ENCODE measurements at regions of chr5 and their contacts with region 1.

Region 1: DNA sequence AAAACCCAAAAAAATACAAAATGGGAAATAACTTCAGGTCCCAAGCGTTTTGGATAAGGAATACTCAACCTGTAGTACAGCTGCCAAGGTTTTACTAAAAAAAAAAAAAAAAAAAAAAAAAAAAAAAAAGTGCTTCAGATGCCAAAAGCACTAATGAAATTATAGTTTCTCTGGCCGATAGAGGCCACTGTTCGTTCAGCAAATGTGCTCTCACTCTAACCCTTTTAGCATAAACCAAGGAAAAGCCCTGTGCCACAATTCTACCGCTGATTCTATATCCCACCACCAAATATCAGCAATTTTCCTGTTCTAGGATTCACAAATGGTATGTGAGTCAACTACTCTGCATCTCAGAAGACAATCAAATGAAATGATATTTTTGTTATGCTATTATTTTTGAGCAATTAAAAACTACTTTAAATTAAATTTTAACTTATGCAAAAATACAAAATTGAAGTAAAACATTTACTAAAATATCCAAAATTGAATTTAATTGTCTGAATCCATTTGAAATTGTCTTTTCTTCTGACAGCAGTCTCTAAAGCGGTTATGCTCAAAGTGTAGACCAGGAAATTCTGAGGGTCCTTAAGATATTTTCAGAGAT is 79.8 kb downstream of the RICTOR start:
- DNase-seq: peak; percentile 62
- ATAC-seq: peak; percentile 33
- H3K4me3 ChIP-seq: no peak overlapping the region
- H3K4me3 Mint-ChIP-seq: no peak overlapping the region
- H3K27ac ChIP-seq: no peak overlapping the region
- H3K27ac Mint-ChIP-seq: no peak overlapping the region
- H3K4me1 ChIP-seq: no peaks in the 10 kb centered on the region
- H3K4me1 Mint-ChIP-seq: peaks cover 2% of the 10 kb centered on the region
- H3K27me3 ChIP-seq: no peaks in the 10 kb centered on the region
- H3K27me3 Mint-ChIP-seq: no peaks in the 10 kb centered on the region
- CTCF ChIP-seq: peak; percentile 33

Region 2: DNA sequence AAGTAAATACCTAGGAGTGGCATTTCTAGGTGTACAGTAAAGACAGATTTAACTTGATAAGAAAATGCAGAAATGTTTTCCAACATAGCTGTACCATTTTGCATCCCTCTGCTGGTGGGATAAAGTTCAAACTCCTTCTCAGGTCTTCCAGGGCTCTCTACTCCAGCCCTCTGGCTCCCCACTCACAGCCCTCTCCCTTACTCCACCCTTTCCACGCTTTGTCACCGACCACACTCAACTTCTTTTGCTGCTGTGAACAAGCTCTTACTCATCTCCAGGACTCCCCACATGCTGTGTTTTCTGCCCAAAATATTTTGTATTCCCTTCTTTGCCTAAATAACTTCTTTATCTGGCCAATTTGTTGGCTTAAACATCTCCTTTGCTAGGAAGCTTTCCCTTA is 239.2 kb before region 1 on chr5:
- CTCF ChIA-PET with region 1: no interaction called
- POLR2A ChIA-PET with region 1: no interaction called
- intact Hi-C with region 1: no loop called
- DNase-seq: no peak
- ATAC-seq: no peak
- H3K4me3 ChIP-seq: no peak overlapping the region
- H3K4me3 Mint-ChIP-seq: no peak overlapping the region
- H3K27ac ChIP-seq: no peak overlapping the region
- H3K27ac Mint-ChIP-seq: no peak overlapping the region
- H3K4me1 ChIP-seq: no peaks in the 10 kb centered on the region
- H3K4me1 Mint-ChIP-seq: no peaks in the 10 kb centered on the region
- H3K27me3 ChIP-seq: no peaks in the 10 kb centered on the region
- H3K27me3 Mint-ChIP-seq: peaks cover 16% of the 10 kb centered on the region
- CTCF ChIP-seq: no peak

Region 3: GRCh38 chr5:38831909-38832308 is 162.5 kb before region 1 on chr5:
- CTCF ChIA-PET with region 1: no interaction called
- POLR2A ChIA-PET with region 1: no interaction called
- intact Hi-C with region 1: no loop called
- DNase-seq: no peak
- ATAC-seq: no peak
- H3K4me3 ChIP-seq: no peak overlapping the region
- H3K4me3 Mint-ChIP-seq: no peak overlapping the region
- H3K27ac ChIP-seq: no peak overlapping the region
- H3K27ac Mint-ChIP-seq: no peak overlapping the region
- H3K4me1 ChIP-seq: no peaks in the 10 kb centered on the region
- H3K4me1 Mint-ChIP-seq: no peaks in the 10 kb centered on the region
- H3K27me3 ChIP-seq: no peaks in the 10 kb centered on the region
- H3K27me3 Mint-ChIP-seq: peaks cover 24% of the 10 kb centered on the region
- CTCF ChIP-seq: no peak

Region 4: DNA sequence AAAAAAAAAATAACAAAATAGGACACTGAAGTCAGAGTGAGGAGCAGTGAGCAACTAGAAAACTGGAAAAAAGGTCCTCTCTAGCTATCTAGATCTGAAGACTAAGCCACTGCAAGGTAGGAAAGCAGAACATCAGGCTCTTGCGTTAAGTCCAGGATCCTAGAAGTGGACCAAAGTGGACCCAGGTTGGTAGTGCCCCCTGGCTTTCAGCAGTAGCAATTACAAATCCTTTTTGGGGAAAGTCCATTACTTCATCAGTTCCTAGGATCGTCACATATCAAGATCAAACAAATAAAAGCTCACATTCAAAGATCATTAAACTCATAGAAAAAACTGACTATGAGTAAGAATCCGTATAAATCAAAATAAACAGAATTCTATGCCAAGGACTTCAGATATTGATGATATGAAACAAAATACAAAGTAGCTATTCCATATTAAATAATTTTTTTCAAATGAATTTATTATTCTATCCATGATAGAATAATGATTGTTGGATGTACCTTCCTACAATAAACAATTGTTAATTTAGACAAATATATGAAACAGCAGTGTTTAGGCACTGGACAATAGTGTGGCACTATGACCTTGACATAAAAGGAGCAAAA is 86.3 kb after region 1 on chr5:
- CTCF ChIA-PET with region 1: interaction called, 26 read pairs
- POLR2A ChIA-PET with region 1: no interaction called
- intact Hi-C with region 1: loop called (anchors 1 kb)
- DNase-seq: peak; percentile 55
- ATAC-seq: peak; percentile 37
- H3K4me3 ChIP-seq: no peak overlapping the region
- H3K4me3 Mint-ChIP-seq: no peak overlapping the region
- H3K27ac ChIP-seq: no peak overlapping the region
- H3K27ac Mint-ChIP-seq: no peak overlapping the region
- H3K4me1 ChIP-seq: peaks cover 10 to 16% of the 10 kb centered on the region in 2 donors
- H3K4me1 Mint-ChIP-seq: peaks cover 23% of the 10 kb centered on the region
- H3K27me3 ChIP-seq: no peaks in the 10 kb centered on the region
- H3K27me3 Mint-ChIP-seq: peaks cover 3% of the 10 kb centered on the region
- CTCF ChIP-seq: peak; percentile 76

Region 5: DNA sequence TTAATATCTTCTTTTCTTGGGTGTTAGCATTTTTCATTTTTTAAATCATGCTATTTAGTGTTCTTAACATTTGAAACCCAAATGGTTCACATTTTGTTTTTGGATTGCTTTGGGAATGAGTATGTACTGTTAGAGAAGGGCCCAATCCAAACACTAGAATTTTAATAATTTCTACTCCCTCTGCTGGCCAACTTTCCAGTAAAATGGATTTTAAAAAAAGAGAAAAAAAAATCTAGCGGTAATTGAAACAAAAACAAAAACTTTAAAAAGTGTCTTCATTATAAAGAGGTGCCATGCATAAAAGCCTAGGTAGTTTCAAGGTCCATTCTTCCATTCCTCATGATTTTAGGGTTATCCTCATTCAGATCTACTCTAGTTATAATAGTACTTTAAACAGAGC is 111.9 kb after region 1 on chr5:
- CTCF ChIA-PET with region 1: interaction called, 3 read pairs
- POLR2A ChIA-PET with region 1: no interaction called
- intact Hi-C with region 1: loop called (anchors 1 kb)
- DNase-seq: peak; percentile 18
- ATAC-seq: no peak
- H3K4me3 ChIP-seq: no peak overlapping the region
- H3K4me3 Mint-ChIP-seq: no peak overlapping the region
- H3K27ac ChIP-seq: no peak overlapping the region
- H3K27ac Mint-ChIP-seq: no peak overlapping the region
- H3K4me1 ChIP-seq: no peaks in the 10 kb centered on the region
- H3K4me1 Mint-ChIP-seq: no peaks in the 10 kb centered on the region
- H3K27me3 ChIP-seq: no peaks in the 10 kb centered on the region
- H3K27me3 Mint-ChIP-seq: peaks cover 5% of the 10 kb centered on the region
- CTCF ChIP-seq: peak; percentile 34

Region 6: DNA sequence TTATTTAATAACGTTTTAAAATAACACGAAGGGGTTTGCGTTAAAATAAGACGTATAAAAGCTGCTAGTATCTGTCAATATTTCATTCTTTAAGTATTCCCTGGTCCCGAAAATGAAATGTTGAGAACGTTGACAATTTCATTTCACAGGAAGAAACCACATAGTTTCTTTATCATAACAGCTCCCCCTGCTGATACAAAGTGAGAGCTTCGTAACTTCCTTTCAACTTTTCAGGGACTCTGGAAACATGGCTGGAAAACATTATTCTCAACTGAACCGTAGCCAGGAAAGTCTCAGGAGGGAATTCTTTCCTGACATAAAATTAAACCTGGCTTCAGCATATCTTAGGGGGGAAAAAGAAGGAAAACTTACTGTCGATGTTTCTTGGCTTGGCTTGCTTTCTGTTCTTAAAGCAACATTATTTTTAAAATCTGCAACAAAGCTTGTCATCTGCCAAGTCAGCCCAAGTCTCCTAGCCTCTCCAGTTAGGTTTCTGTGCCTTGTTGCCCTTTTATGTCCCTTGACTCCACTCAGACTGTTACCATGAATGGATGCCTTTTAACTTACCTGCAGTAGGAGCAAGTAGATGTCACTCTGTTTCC is 553.2 kb after region 1 on chr5:
- CTCF ChIA-PET with region 1: no interaction called
- POLR2A ChIA-PET with region 1: no interaction called
- intact Hi-C with region 1: loop called (anchors 10 kb)
- DNase-seq: peak; percentile 47
- ATAC-seq: no peak
- H3K4me3 ChIP-seq: no peak overlapping the region
- H3K4me3 Mint-ChIP-seq: no peak overlapping the region
- H3K27ac ChIP-seq: no peak overlapping the region
- H3K27ac Mint-ChIP-seq: no peak overlapping the region
- H3K4me1 ChIP-seq: peaks cover 2 to 3% of the 10 kb centered on the region in 2 donors
- H3K4me1 Mint-ChIP-seq: peaks cover 1% of the 10 kb centered on the region
- H3K27me3 ChIP-seq: peaks cover 0 to 8% (median under 1%) of the 10 kb centered on the region in 4 experiments
- H3K27me3 Mint-ChIP-seq: peaks cover 19% of the 10 kb centered on the region
- CTCF ChIP-seq: peak; percentile 74